CD14-positive monocyte (primary cell): ENCODE measurements at regions of chr7 and their contacts with region 1.

Region 1: GRCh38 chr7:2863461-2864066 is 19.5 kb upstream of the GNA12 start:
- DNase-seq: peak; percentile 96 to 99 (median 98)
- H3K4me3 ChIP-seq: peak overlapping the region in 2 of 3 experiments; percentile 28 to 49
- H3K4me3 Mint-ChIP-seq: peak overlapping the region; percentile 67 to 91
- H3K27ac ChIP-seq: peak overlapping the region; percentile 93 to 99
- H3K27ac Mint-ChIP-seq: peak overlapping the region; percentile 98 to 100 (median 100)
- H3K4me1 ChIP-seq: peaks cover 29% of the 10 kb centered on the region in 2 donors
- H3K4me1 Mint-ChIP-seq: peaks cover 30% of the 10 kb centered on the region
- H3K27me3 ChIP-seq: peaks cover 0 to 10% of the 10 kb centered on the region in 2 donors
- H3K27me3 Mint-ChIP-seq: peaks cover 40 to 55% (median 42%) of the 10 kb centered on the region in 3 donors
- CTCF ChIP-seq: no peak

Region 2: DNA sequence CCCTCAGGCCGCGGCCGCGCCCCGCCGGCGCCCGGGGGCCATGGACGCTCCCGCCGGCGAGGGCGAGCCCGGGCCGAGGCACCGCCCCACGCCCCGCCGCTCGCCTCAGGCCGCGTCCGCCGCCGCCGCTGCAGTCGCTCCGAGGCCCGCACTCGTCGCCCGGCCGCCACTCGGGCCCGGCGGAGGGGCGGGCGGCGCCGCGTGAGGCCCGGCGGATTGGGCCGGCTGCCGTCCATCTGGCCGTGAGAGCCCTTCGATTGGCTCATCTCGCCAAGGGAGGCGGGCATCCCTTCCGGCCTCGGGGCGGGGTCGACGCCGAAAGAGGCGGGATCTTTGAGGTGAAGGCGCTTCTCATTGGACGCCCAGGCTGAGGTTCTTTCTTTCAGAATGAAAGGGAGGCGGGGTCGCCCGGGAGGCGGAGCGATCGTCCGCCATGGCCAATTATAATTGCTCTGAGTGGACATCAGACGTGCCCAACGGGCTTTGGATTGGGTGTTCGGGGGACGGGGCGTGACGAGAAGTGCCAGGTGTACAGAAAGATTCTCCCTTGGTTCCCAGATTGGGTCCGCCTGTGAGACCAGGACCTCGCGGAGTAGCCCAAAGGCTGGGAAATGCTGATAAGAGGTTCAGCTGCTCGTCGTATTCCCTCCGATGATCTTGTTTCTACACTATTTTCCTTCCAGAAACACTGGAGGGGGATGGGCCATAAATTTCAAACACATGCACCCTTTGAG is 19.2 kb before region 1 on chr7 and contains the start of gene GNA12:
- intact Hi-C with region 1: loop called in 1 of 2 experiments (anchors 2 kb)
- DNase-seq: peak; percentile 97 to 98 (median 98)
- H3K4me3 ChIP-seq: peak within 1 kb of the TSS; percentile 39 to 74 (median 66)
- H3K4me3 Mint-ChIP-seq: peak within 1 kb of the TSS; percentile 83 to 91
- H3K27ac ChIP-seq: peak within 1 kb of the TSS in 1 of 2 donors; percentile 56
- H3K27ac Mint-ChIP-seq: peak within 1 kb of the TSS in 6 of 7 donors; percentile 74 to 86 (median 80)
- H3K4me1 ChIP-seq: peaks cover 14 to 21% of the 10 kb centered on the region in 2 donors
- H3K4me1 Mint-ChIP-seq: peaks cover 45% of the 10 kb centered on the region
- H3K27me3 ChIP-seq: no peaks in the 10 kb centered on the region
- H3K27me3 Mint-ChIP-seq: peaks cover 4 to 9% (median 6%) of the 10 kb centered on the region in 3 donors
- CTCF ChIP-seq: no peak
- polyA plus RNA-seq, gene GNA12: 3.4 to 25.9 (median 10.6) TPM